Caco-2 (cell line): ENCODE measurements at regions of chr22 and their contacts with region 1.

Region 1: DNA sequence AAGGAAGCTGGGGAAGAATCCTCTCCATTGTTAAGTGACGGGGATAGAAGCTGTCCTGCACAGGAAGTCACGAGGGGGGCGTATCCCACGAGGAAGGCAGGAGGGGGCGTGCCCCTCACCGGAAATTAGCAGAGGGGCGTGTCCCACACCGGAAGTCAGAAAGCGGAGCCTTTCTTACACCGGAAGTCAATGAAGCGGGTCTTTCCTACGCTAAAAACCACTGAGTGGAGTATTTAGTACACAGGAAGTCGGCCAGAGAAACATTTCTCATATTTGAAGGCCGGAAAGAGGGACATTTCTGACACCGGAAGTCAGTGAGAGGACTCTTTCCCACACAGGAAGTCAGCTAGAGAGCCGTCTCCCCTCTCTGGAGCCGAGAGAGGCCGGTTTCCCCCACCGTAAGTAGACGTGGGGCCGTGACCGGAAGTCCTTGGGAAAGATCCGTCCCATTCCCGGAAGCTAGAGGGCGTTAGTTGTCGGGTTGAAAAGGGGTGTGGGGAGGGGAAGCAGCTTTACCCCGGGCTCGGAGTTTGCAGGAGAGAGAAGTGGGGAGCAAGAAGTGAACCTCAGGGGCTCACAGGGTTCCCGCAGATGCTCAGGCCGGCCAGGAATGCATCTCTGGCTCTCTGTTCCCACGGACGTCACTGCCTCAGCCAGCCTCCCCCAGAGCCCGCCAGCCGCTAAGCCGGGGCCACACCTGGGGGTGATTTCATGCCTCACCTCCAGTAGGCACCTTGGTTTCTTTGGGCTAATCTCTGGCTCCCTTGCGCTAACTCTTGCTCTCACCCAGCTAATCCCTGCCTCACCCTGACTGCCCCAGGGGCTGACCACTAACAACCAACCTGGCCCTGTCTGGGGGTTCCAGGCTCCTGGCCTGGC is 15.4 kb downstream of the MIAT start:
- DNase-seq: peak; percentile 88 to 89
- H3K4me3 ChIP-seq: peak overlapping the region; percentile 70
- H3K4me3 Mint-ChIP-seq: peak overlapping the region; percentile 80
- H3K27ac Mint-ChIP-seq: peak overlapping the region; percentile 88
- H3K4me1 ChIP-seq: no peaks in the 10 kb centered on the region
- H3K4me1 Mint-ChIP-seq: no peaks in the 10 kb centered on the region
- H3K27me3 ChIP-seq: no peaks in the 10 kb centered on the region
- H3K27me3 Mint-ChIP-seq: no peaks in the 10 kb centered on the region
- CTCF ChIP-seq: peak; percentile 29 to 39

Region 2: GRCh38 chr22:26511857-26512793 is 160.7 kb before region 1 on chr22 and contains the start of gene TFIP11:
- CTCF ChIA-PET with region 1: no interaction called
- POLR2A ChIA-PET with region 1: no interaction called
- intact Hi-C with region 1: no loop called
- DNase-seq: peak; percentile 93 to 94
- H3K4me3 ChIP-seq: peak within 1 kb of the TSS; percentile 81
- H3K4me3 Mint-ChIP-seq: peak within 1 kb of the TSS; percentile 94
- H3K27ac Mint-ChIP-seq: peak within 1 kb of the TSS; percentile 93
- H3K4me1 ChIP-seq: no peaks in the 10 kb centered on the region; the same call in 1 of the 2 replicates
- H3K4me1 Mint-ChIP-seq: no peaks in the 10 kb centered on the region
- H3K27me3 ChIP-seq: no peaks in the 10 kb centered on the region
- H3K27me3 Mint-ChIP-seq: no peaks in the 10 kb centered on the region
- CTCF ChIP-seq: peak in 1 of 2 experiments; percentile 43
- total RNA-seq, gene TFIP11: 27.4 and 27.7 TPM in 2 replicates

Region 3: GRCh38 chr22:26835929-26836528 is 163.2 kb after region 1 on chr22:
- CTCF ChIA-PET with region 1: no interaction called
- POLR2A ChIA-PET with region 1: no interaction called
- intact Hi-C with region 1: loop called (anchors 10 kb)
- DNase-seq: peak; percentile 41 to 57
- H3K4me3 ChIP-seq: no peak overlapping the region
- H3K4me3 Mint-ChIP-seq: no peak overlapping the region
- H3K27ac Mint-ChIP-seq: no peak overlapping the region
- H3K4me1 ChIP-seq: no peaks in the 10 kb centered on the region
- H3K4me1 Mint-ChIP-seq: no peaks in the 10 kb centered on the region
- H3K27me3 ChIP-seq: no peaks in the 10 kb centered on the region
- H3K27me3 Mint-ChIP-seq: peaks cover 25% of the 10 kb centered on the region
- CTCF ChIP-seq: peak; percentile 35 to 60